ENCODE measurements at regions of chr10 and their contacts with region 1.

Region 1: DNA sequence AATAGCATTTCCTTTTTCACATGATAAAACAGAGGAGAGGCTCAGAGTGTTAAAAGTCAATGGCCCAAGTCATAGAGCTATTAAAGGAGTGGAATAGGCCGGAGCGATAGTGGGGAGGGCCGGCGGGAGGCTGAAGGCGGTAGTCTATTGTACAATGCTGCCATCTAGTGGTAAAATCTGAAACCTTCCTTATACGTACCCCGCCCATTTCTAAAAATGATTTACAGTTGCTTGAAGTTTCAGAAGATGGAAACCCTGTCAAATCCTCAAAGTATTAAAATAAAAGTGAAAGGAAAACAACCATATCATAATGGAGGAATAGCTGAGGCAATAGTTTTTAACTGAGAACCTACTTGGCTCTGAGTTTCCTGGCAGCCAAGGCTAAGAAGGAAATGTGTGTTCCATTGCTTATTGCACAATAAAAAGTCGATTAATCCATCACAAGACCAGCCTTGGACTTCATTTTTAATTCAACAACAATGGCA is 209.1 kb downstream of the CCSER2 start:
- DNase-seq: peak; percentile 85
- H3K4me3 ChIP-seq: no peak overlapping the region; a peak in 1 of 4 replicates
- H3K27ac ChIP-seq: no peak overlapping the region
- H3K4me1 ChIP-seq: peaks cover 10 to 16% of the 10 kb centered on the region in 2 experiments; a peak in 3 of 4 replicates
- H3K27me3 ChIP-seq: no peaks in the 10 kb centered on the region
- CTCF ChIP-seq: peak; percentile 90
- EP300 ChIP-seq: no peak
- RAD21 ChIP-seq: peak; percentile 95

Region 2: GRCh38 chr10:84147347-84147746 is 390.1 kb before region 1 on chr10:
- CTCF ChIA-PET with region 1: interaction called, 26 read pairs
- POLR2A ChIA-PET with region 1: no interaction called
- DNase-seq: no peak
- H3K4me3 ChIP-seq: no peak overlapping the region
- H3K27ac ChIP-seq: no peak overlapping the region
- H3K4me1 ChIP-seq: no peaks in the 10 kb centered on the region
- H3K27me3 ChIP-seq: no peaks in the 10 kb centered on the region
- CTCF ChIP-seq: no peak
- EP300 ChIP-seq: no peak
- RAD21 ChIP-seq: no peak

Region 3: GRCh38 chr10:84230359-84230758 is 307.1 kb before region 1 on chr10:
- CTCF ChIA-PET with region 1: no interaction called
- POLR2A ChIA-PET with region 1: no interaction called
- DNase-seq: no peak
- H3K4me3 ChIP-seq: no peak overlapping the region
- H3K27ac ChIP-seq: no peak overlapping the region
- H3K4me1 ChIP-seq: no peaks in the 10 kb centered on the region; a peak in 1 of 4 replicates
- H3K27me3 ChIP-seq: no peaks in the 10 kb centered on the region
- CTCF ChIP-seq: no peak
- EP300 ChIP-seq: no peak
- RAD21 ChIP-seq: no peak

Region 4: DNA sequence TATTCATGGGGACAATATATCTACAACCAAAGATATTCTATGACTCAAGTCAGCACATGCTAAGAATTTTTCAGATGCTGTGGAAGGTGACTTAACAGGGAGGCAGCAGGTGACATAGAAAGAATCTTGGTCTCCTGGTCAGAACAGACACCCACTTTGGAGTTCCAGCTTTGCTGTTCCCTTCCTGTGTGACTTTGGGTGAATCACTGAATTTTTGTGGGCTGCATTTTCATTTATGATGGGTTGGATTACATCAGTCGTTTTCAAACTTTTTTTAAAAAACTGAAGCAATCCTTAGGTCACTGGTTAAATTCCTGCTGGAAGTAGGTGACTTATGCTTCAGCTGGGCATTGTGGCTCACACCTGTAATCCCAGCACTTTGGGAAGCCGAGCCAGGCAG is 267.7 kb before region 1 on chr10:
- CTCF ChIA-PET with region 1: interaction called, 201 read pairs
- POLR2A ChIA-PET with region 1: no interaction called
- DNase-seq: no peak
- H3K4me3 ChIP-seq: no peak overlapping the region
- H3K27ac ChIP-seq: no peak overlapping the region; a peak in 1 of 4 replicates
- H3K4me1 ChIP-seq: peaks cover 7 to 8% of the 10 kb centered on the region in 2 experiments; a peak in 3 of 4 replicates
- H3K27me3 ChIP-seq: no peaks in the 10 kb centered on the region
- CTCF ChIP-seq: no peak
- EP300 ChIP-seq: 0 out of 4 replicates have a peak, but pooled peaks of 1 of the 2 experiments have one; percentile 30
- RAD21 ChIP-seq: no peak

Region 5: DNA sequence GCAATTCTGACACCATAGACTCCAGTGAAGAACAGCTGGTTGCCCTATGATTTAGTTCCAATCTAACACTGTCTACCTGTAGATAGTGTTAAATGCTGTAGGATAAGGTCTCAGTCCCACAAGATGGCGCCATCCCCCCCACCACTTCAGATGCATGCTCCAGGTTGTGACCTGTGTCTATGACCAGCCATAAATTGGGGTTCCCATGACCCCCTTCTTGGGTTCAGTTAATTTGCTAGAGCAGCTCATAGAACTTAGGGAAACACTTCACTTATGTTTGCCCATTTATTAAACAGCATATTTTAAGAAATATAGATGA is 196.0 kb before region 1 on chr10:
- CTCF ChIA-PET with region 1: interaction called, 10 read pairs
- POLR2A ChIA-PET with region 1: no interaction called
- DNase-seq: no peak
- H3K4me3 ChIP-seq: no peak overlapping the region
- H3K27ac ChIP-seq: no peak overlapping the region
- H3K4me1 ChIP-seq: peaks cover 9 to 20% of the 10 kb centered on the region in 2 experiments
- H3K27me3 ChIP-seq: no peaks in the 10 kb centered on the region
- CTCF ChIP-seq: no peak; the same call in 1 of the 2 replicates
- EP300 ChIP-seq: no peak
- RAD21 ChIP-seq: no peak

Region 6: GRCh38 chr10:84375011-84375410 is 162.5 kb before region 1 on chr10:
- CTCF ChIA-PET with region 1: interaction called, 136 read pairs
- POLR2A ChIA-PET with region 1: no interaction called
- DNase-seq: peak; percentile 29
- H3K4me3 ChIP-seq: no peak overlapping the region
- H3K27ac ChIP-seq: no peak overlapping the region; a peak in 1 of 4 replicates
- H3K4me1 ChIP-seq: no peaks in the 10 kb centered on the region; a peak in 1 of 4 replicates
- H3K27me3 ChIP-seq: no peaks in the 10 kb centered on the region
- CTCF ChIP-seq: peak; percentile 83
- EP300 ChIP-seq: no peak
- RAD21 ChIP-seq: peak; percentile 89

Region 7: DNA sequence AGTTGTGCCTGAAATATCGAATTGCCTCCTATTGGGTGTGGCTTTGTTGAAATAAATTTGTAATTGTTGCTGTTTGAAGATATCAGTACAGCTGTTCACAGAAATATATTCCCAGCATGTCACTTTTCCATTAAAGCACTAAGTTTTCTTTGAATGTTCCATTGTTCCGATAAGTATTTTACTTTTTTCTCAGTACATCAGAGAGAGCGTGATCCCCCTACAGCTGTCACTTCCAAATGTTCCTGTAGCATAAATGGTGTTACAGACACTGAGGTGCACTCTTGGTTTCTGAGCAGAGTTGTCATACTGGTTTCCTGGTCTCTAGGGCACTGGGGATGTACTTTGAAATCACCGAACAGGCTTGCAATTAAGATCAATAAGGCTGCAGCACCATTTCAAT is 19.9 kb before region 1 on chr10:
- CTCF ChIA-PET with region 1: interaction called, 34 read pairs
- POLR2A ChIA-PET with region 1: no interaction called
- DNase-seq: no peak
- H3K4me3 ChIP-seq: no peak overlapping the region
- H3K27ac ChIP-seq: no peak overlapping the region
- H3K4me1 ChIP-seq: peaks cover 0 to 5% of the 10 kb centered on the region in 2 experiments; a peak in 2 of 4 replicates
- H3K27me3 ChIP-seq: no peaks in the 10 kb centered on the region
- CTCF ChIP-seq: no peak
- EP300 ChIP-seq: no peak
- RAD21 ChIP-seq: no peak